ENCODE measurements at regions of chr13 and their contacts with region 1.

Region 1: GRCh38 chr13:59677966-59678814 is 485.5 kb downstream of the DIAPH3 start:
- DNase-seq: peak; percentile 72
- ATAC-seq: peak; percentile 88
- H3K4me3 ChIP-seq: no peak overlapping the region
- H3K27ac ChIP-seq: no peak overlapping the region
- H3K4me1 ChIP-seq: peaks cover 3% of the 10 kb centered on the region
- H3K27me3 ChIP-seq: no peaks in the 10 kb centered on the region
- CTCF ChIP-seq: peak; percentile 88
- POLR2A ChIP-seq: no peak
- RAD21 ChIP-seq: peak; percentile 89

Region 2: GRCh38 chr13:59391696-59392095 is 286.5 kb before region 1 on chr13:
- CTCF ChIA-PET with region 1: interaction called, 10 read pairs
- POLR2A ChIA-PET with region 1: no interaction called
- dilution Hi-C with region 1: no loop called
- in situ Hi-C with region 1: loop called (anchors 5 kb)
- intact Hi-C with region 1: loop called (anchors 1 kb)
- DNase-seq: peak; percentile 74
- ATAC-seq: peak; percentile 96
- H3K4me3 ChIP-seq: no peak overlapping the region
- H3K27ac ChIP-seq: no peak overlapping the region
- H3K4me1 ChIP-seq: no peaks in the 10 kb centered on the region
- H3K27me3 ChIP-seq: no peaks in the 10 kb centered on the region
- CTCF ChIP-seq: peak; percentile 87
- POLR2A ChIP-seq: no peak
- RAD21 ChIP-seq: peak; percentile 84

Region 3: GRCh38 chr13:59771272-59771671 is 93.1 kb after region 1 on chr13:
- CTCF ChIA-PET with region 1: interaction called, 29 read pairs
- POLR2A ChIA-PET with region 1: no interaction called
- dilution Hi-C with region 1: no loop called
- in situ Hi-C with region 1: loop called (anchors 5 kb)
- intact Hi-C with region 1: loop called (anchors 1 kb)
- DNase-seq: peak; percentile 59
- ATAC-seq: 0 out of 2 replicates have a peak, but pooled peaks have one; percentile 30
- H3K4me3 ChIP-seq: no peak overlapping the region
- H3K27ac ChIP-seq: no peak overlapping the region
- H3K4me1 ChIP-seq: peaks cover 7% of the 10 kb centered on the region
- H3K27me3 ChIP-seq: no peaks in the 10 kb centered on the region
- CTCF ChIP-seq: peak; percentile 77
- POLR2A ChIP-seq: no peak
- RAD21 ChIP-seq: peak; percentile 76

Region 4: DNA sequence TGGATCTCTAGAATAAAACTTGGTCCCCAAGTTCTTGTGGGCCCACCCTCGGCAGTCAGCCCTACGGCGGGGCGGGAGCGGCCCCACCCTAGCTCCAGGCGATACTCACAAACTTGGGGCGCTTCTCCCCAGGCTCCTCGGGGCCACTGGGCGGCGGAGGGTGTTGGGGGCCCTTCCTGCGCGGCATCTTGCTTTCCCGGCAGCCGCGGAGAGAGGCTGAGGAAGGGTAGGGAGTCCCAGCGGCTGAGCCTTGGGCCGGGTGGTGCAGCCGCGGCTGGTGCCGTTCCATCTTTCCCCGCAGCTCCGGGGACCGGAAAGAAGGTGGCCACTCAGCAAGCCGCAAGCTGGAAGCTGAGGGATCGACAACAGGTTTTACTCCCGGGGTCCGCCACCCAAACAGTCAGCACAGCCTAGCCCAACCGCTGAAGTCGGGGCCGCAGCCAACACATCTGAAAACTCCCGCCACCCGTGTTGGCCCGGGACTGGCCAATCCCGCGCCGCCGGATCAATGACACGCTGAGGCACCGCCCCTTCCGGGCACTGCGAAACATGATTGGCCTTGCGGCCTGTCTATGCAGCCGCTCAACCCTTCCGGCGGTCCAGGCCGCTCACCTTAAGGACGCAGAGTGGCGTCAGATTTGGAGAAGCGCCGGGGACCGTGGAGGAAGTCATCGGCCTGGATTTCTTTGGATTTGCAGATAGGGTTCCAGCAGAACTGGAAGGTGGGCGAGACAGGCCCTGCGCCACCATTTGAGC is 485.5 kb after region 1 on chr13 and contains the start of gene DIAPH3:
- CTCF ChIA-PET with region 1: no interaction called
- POLR2A ChIA-PET with region 1: no interaction called
- dilution Hi-C with region 1: no loop called
- in situ Hi-C with region 1: no loop called
- intact Hi-C with region 1: loop called (anchors 10 kb)
- DNase-seq: peak; percentile 95
- ATAC-seq: peak; percentile 99
- H3K4me3 ChIP-seq: peak within 1 kb of the TSS; percentile 64
- H3K27ac ChIP-seq: peak within 1 kb of the TSS; percentile 95
- H3K4me1 ChIP-seq: peaks cover 4% of the 10 kb centered on the region; the same call in 1 of the 2 replicates
- H3K27me3 ChIP-seq: no peaks in the 10 kb centered on the region
- CTCF ChIP-seq: no peak
- POLR2A ChIP-seq: peak; percentile 80
- RAD21 ChIP-seq: no peak
- total RNA-seq, gene DIAPH3: 9.3 and 16.1 TPM in 2 replicates

Region 5: GRCh38 chr13:60329221-60329983 is 651.2 kb after region 1 on chr13:
- CTCF ChIA-PET with region 1: interaction called, 7 read pairs
- POLR2A ChIA-PET with region 1: no interaction called
- dilution Hi-C with region 1: no loop called
- in situ Hi-C with region 1: loop called (anchors 25 kb)
- intact Hi-C with region 1: loop called (anchors 2 kb)
- DNase-seq: peak; percentile 16
- ATAC-seq: peak; percentile 90
- H3K4me3 ChIP-seq: no peak overlapping the region
- H3K27ac ChIP-seq: peak overlapping the region; percentile 1; the same call in 1 of the 2 replicates
- H3K4me1 ChIP-seq: peaks cover 2% of the 10 kb centered on the region; the same call in 1 of the 2 replicates
- H3K27me3 ChIP-seq: no peaks in the 10 kb centered on the region; the same call in 1 of the 2 replicates
- CTCF ChIP-seq: peak; percentile 50
- POLR2A ChIP-seq: no peak
- RAD21 ChIP-seq: peak; percentile 61

Region 6: GRCh38 chr13:60431108-60431700 is 753.0 kb after region 1 on chr13:
- CTCF ChIA-PET with region 1: interaction called, 3 read pairs
- POLR2A ChIA-PET with region 1: no interaction called
- dilution Hi-C with region 1: no loop called
- in situ Hi-C with region 1: no loop called
- intact Hi-C with region 1: loop called (anchors 2 kb)
- DNase-seq: peak; percentile 72
- ATAC-seq: peak; percentile 95
- H3K4me3 ChIP-seq: no peak overlapping the region
- H3K27ac ChIP-seq: no peak overlapping the region
- H3K4me1 ChIP-seq: no peaks in the 10 kb centered on the region
- H3K27me3 ChIP-seq: no peaks in the 10 kb centered on the region
- CTCF ChIP-seq: peak; percentile 94
- POLR2A ChIP-seq: no peak
- RAD21 ChIP-seq: peak; percentile 83